WTC11 (cell line): ENCODE measurements at regions of chr12 and their contacts with region 1.

Region 1: GRCh38 chr12:125049093-125049458 is 16.2 kb upstream of the AACS start:
- DNase-seq: no peak
- ATAC-seq: no peak
- H3K4me3 Mint-ChIP-seq: peak overlapping the region; percentile 81
- H3K27ac Mint-ChIP-seq: peak overlapping the region; percentile 96
- H3K4me1 Mint-ChIP-seq: peaks cover 5% of the 10 kb centered on the region; the same call in 1 of the 2 replicates
- H3K27me3 Mint-ChIP-seq: no peaks in the 10 kb centered on the region; the same call in 1 of the 2 replicates
- CTCF ChIP-seq: no peak

Region 2: DNA sequence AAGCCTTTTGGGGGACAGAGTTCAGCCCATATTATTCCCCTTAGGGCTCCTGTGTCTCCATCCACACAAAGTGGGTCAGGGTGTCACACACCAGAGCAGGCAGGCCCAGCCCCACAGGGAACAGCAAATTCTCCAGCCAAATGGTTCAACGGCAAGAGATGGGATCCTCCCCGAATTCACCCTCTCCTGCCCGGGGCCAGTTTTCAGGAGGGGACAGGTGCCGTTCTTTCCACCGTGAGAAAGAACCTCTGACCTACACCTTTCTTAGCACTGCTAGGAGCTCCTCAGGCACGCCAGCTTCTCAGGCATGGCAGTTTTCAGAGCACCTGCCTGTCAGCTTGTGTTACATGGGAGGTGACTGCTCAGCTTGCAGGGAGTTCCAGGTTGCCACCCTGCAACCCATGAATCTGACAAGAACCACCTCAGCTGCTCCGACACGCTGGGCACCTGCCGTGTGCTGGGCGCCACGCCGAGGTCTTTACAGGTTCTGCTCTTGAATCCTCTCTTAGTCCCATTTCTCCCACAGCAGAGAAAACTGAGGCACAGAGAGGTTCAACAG is 42.8 kb before region 1 on chr12:
- CTCF ChIA-PET with region 1: no interaction called
- POLR2A ChIA-PET with region 1: no interaction called
- DNase-seq: no peak
- ATAC-seq: no peak
- H3K4me3 Mint-ChIP-seq: no peak overlapping the region
- H3K27ac Mint-ChIP-seq: 0 out of 2 replicates have a peak overlapping the region, but pooled peaks have one; percentile 15
- H3K4me1 Mint-ChIP-seq: no peaks in the 10 kb centered on the region
- H3K27me3 Mint-ChIP-seq: no peaks in the 10 kb centered on the region
- CTCF ChIP-seq: no peak

Region 3: DNA sequence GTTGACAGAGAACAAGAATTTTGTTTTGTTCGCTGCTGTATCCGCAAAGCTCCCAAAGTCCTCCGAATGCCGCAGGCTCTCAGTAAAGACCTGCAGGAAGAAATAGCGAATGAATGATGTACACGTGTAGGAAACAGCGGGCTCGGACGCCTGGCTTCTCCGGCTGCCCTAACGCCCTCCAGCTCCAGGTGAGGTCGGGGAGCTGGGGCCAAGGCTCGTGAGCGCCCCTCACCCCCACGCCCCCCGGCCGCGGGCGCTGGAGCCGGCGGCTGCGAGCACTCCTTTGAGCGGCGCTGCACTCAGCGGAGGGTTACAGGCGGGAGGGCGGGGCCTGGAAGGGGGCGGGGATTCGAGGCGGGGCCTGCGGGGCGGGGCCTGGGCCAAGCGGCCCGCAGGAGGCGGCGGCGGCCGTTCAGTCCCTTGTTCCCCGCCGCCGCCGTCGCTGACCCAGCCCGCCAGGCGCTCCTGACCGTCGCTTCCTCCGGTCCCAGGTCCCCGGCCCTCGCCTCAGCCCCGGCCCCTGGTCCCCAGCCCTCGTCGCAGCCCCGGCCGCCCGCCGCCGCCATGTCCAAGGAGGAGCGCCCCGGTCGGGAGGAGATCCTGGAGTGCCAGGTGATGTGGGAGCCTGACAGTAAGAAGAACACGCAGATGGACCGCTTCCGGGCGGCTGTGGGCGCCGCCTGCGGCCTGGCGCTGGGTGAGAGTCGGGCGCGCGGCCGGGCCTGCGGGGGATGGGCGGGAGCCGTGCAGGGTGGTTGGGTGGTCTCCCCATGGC is 16.1 kb after region 1 on chr12 and contains the start of gene AACS:
- CTCF ChIA-PET with region 1: interaction called, 19 read pairs
- POLR2A ChIA-PET with region 1: interaction called, 12 read pairs
- DNase-seq: peak; percentile 84
- ATAC-seq: peak; percentile 86
- H3K4me3 Mint-ChIP-seq: peak within 1 kb of the TSS; percentile 89
- H3K27ac Mint-ChIP-seq: peak within 1 kb of the TSS; percentile 89
- H3K4me1 Mint-ChIP-seq: peaks cover 47% of the 10 kb centered on the region
- H3K27me3 Mint-ChIP-seq: 0 out of 2 replicates have a peak, but pooled peaks cover 3% of the 10 kb centered on the region
- CTCF ChIP-seq: no peak
- total RNA-seq, gene AACS: 44.1 to 54.0 TPM (median 47.0 TPM) in 3 replicates